ENCODE measurements at regions of chr21 and their contacts with region 1.

Region 1: DNA sequence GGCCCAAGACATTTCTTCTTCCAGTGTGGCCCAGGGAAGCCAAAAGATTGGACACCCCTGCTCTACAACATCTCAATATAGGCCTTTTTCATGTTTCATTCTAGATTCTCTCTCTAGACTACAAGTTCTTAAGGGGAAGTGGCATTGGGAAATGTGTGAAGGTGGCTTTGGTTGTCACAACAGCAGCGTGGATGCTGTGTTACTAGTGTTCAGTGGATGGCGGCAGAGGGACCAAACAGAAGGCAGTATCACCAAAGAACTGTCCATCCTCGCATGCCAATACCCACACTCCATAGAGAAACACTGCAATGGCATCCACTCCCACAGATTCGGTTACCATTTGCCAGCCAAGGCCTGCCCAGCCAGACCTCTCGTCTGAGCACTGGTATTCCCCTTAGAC is 24.3 kb upstream of the IFNAR2 start:
- DNase-seq: no peak
- ATAC-seq: peak; percentile 29
- H3K4me3 ChIP-seq: no peak overlapping the region
- H3K27ac ChIP-seq: peak overlapping the region; percentile 51
- H3K4me1 ChIP-seq: peaks cover 19% of the 10 kb centered on the region
- H3K27me3 ChIP-seq: no peaks in the 10 kb centered on the region
- CTCF ChIP-seq: peak in 1 of 3 experiments; percentile 8; a peak in 1 of 6 replicates
- EP300 ChIP-seq: no peak
- POLR2A ChIP-seq: no peak
- RAD21 ChIP-seq: no peak

Region 2: DNA sequence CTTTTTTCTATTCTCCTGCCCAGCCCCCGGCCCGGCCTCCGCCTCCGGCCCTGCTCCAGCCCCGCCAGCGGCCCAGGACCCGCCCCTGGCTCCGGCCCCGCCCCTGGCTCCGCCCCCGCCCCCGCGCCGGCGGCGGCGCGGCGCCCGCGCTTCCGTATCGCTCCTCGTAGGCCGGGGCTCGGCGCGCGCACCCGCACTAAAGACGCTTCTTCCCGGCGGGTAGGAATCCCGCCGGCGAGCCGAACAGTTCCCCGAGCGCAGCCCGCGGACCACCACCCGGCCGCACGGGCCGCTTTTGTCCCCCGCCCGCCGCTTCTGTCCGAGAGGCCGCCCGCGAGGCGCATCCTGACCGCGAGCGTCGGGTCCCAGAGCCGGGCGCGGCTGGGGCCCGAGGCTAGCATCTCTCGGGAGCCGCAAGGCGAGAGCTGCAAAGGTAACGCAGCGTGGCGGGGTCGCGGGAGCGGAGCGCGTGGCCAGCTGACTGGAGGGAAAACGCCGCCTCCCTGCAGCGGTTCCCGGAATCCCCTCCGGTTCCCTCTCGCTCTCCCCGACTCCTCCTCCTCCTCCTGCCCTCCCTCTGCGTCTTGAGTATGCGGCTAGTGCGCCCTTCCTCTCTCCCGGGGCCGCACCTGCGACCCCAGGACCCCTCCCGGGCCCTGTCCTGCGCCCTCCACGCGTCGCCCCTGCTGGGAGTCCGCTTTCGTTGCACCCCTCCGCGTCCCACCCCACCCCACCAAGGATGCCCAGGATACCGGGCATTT is 24.5 kb after region 1 on chr21 and contains the start of gene IFNAR2:
- CTCF ChIA-PET with region 1: interaction called, 6 read pairs
- POLR2A ChIA-PET with region 1: interaction called, 20 read pairs
- RAD21 ChIA-PET with region 1: interaction called, 50 read pairs
- SMC1A ChIA-PET with region 1: interaction called, 23 read pairs
- in situ Hi-C with region 1: no loop called
- intact Hi-C with region 1: loop called (anchors 1 kb)
- DNase-seq: no peak
- ATAC-seq: peak; percentile 75
- H3K4me3 ChIP-seq: peak within 1 kb of the TSS; percentile 100
- H3K27ac ChIP-seq: peak within 1 kb of the TSS; percentile 96
- H3K4me1 ChIP-seq: peaks cover 13% of the 10 kb centered on the region
- H3K27me3 ChIP-seq: no peaks in the 10 kb centered on the region
- CTCF ChIP-seq: no peak
- EP300 ChIP-seq: no peak
- POLR2A ChIP-seq: peak; percentile 64; the same call in 1 of the 2 replicates
- RAD21 ChIP-seq: no peak
- polyA plus RNA-seq, gene IFNAR2: 8.5 to 23.3 TPM

Region 3: GRCh38 chr21:33238565-33239255 is 33.2 kb after region 1 on chr21:
- CTCF ChIA-PET with region 1: interaction called, 10 read pairs
- POLR2A ChIA-PET with region 1: interaction called, 40 read pairs
- RAD21 ChIA-PET with region 1: interaction called, 50 read pairs
- SMC1A ChIA-PET with region 1: interaction called, 43 read pairs
- in situ Hi-C with region 1: no loop called
- intact Hi-C with region 1: loop called (anchors 2 kb)
- DNase-seq: peak; percentile 76
- ATAC-seq: peak; percentile 79
- H3K4me3 ChIP-seq: peak overlapping the region; percentile 66
- H3K27ac ChIP-seq: peak overlapping the region; percentile 86
- H3K4me1 ChIP-seq: peaks cover 56% of the 10 kb centered on the region
- H3K27me3 ChIP-seq: no peaks in the 10 kb centered on the region
- CTCF ChIP-seq: no peak
- EP300 ChIP-seq: peak; percentile 79 to 96
- POLR2A ChIP-seq: 0 out of 2 replicates have a peak, but pooled peaks have one; percentile 40
- RAD21 ChIP-seq: 0 out of 2 replicates have a peak, but pooled peaks have one; percentile 10

Region 4: GRCh38 chr21:33403779-33404585 is 198.5 kb after region 1 on chr21:
- CTCF ChIA-PET with region 1: interaction called, 3 read pairs
- POLR2A ChIA-PET with region 1: interaction called, 4 read pairs
- RAD21 ChIA-PET with region 1: interaction called, 4 read pairs
- SMC1A ChIA-PET with region 1: interaction called, 13 read pairs
- in situ Hi-C with region 1: no loop called
- intact Hi-C with region 1: no loop called
- DNase-seq: no peak
- ATAC-seq: peak; percentile 60
- H3K4me3 ChIP-seq: peak overlapping the region; percentile 84
- H3K27ac ChIP-seq: peak overlapping the region; percentile 97
- H3K4me1 ChIP-seq: peaks cover 15% of the 10 kb centered on the region
- H3K27me3 ChIP-seq: no peaks in the 10 kb centered on the region
- CTCF ChIP-seq: no peak
- EP300 ChIP-seq: no peak
- POLR2A ChIP-seq: peak; percentile 77
- RAD21 ChIP-seq: no peak